ENCODE measurements at regions of chr4 and their contacts with region 1.

Region 1: DNA sequence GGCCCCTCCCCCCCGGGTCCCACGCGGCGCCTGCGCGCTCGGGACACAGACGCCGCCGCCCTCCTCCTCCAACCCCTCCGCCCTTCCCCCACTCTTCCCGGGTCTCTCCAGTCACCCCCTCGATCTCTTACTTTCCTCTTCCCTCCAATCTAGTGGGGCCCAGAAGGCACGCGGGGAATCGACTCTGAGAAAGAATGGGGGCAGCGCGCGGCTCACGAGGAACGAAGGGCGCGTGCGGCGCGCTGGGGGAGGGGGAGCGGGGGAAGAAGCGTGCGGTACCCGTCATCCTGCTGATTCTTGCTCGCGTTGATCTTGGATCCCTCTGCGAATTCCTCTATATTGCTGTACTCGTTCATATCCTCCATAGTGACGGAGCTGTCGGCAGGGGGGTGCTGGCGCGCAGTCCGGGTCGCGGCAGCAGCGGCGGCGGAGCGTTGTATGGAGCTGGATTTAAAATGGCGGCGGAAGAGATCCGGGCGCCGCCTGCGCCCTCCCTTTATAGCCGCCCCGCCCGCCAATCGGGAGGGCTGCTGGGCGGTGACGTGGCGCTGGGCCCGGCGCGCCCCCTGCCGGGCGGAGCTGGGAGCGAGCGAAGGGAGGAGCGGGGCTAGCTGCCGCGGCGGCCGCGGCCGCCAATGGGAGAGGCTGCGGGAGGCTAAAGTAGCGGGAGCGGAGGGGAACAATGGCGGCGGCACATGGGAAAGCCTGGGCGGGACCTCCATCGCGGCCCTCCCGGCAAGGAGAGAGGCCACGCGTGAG is 1.1 kb downstream of the HNRNPDL start:
- DNase-seq: peak; percentile 91
- H3K4me3 ChIP-seq: peak overlapping the region; percentile 95 to 98 (median 98)
- H3K27ac ChIP-seq: peak overlapping the region; percentile 96
- H3K4me1 ChIP-seq: peaks cover 42% of the 10 kb centered on the region
- H3K27me3 ChIP-seq: no peaks in the 10 kb centered on the region
- CTCF ChIP-seq: peak; percentile 74 to 78

Region 2: GRCh38 chr4:81085291-81085690 is 1343.9 kb before region 1 on chr4:
- CTCF ChIA-PET with region 1: no interaction called
- dilution Hi-C with region 1: no loop called
- in situ Hi-C with region 1: no loop called
- intact Hi-C with region 1: no loop called
- DNase-seq: no peak
- H3K4me3 ChIP-seq: no peak overlapping the region
- H3K27ac ChIP-seq: no peak overlapping the region
- H3K4me1 ChIP-seq: no peaks in the 10 kb centered on the region
- H3K27me3 ChIP-seq: no peaks in the 10 kb centered on the region
- CTCF ChIP-seq: no peak

Region 3: GRCh38 chr4:82331814-82332213 is 97.3 kb before region 1 on chr4:
- CTCF ChIA-PET with region 1: no interaction called
- dilution Hi-C with region 1: no loop called
- in situ Hi-C with region 1: no loop called
- intact Hi-C with region 1: no loop called
- DNase-seq: no peak
- H3K4me3 ChIP-seq: no peak overlapping the region
- H3K27ac ChIP-seq: no peak overlapping the region
- H3K4me1 ChIP-seq: no peaks in the 10 kb centered on the region
- H3K27me3 ChIP-seq: no peaks in the 10 kb centered on the region
- CTCF ChIP-seq: no peak

Region 4: DNA sequence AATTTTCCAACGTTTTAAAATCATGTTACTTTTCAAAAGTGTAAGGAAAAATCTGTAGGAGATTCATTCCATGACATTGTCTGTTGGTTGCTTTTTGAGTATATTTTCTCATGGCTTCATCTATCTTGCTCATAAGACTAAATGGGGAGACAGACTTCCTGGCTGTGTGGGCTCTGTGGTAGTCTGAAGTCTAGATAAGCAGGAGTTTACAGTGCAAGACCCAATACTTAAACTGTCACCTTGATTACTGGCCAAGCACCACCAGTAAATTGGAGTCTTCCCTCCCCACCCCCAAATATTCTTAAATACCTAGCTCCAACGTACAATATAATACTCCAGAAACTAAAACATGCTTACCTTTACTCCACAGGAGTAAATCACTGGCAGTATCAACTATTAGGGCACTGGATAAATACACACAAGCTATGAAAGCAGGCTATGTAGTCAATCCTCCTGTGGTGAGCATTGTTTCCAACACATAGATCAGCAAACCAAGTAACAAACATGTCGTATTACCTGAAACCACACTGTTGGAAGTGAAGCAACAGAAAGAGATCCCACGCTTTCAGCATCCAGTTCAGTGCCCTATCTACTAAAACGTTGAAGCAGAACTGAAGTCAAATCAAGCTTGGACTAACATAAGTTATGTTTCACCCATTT is 61.6 kb before region 1 on chr4:
- CTCF ChIA-PET with region 1: no interaction called
- dilution Hi-C with region 1: loop called (anchors 5 kb)
- in situ Hi-C with region 1: no loop called
- intact Hi-C with region 1: no loop called
- DNase-seq: no peak
- H3K4me3 ChIP-seq: no peak overlapping the region
- H3K27ac ChIP-seq: no peak overlapping the region
- H3K4me1 ChIP-seq: peaks cover 26% of the 10 kb centered on the region
- H3K27me3 ChIP-seq: no peaks in the 10 kb centered on the region
- CTCF ChIP-seq: no peak

Region 5: DNA sequence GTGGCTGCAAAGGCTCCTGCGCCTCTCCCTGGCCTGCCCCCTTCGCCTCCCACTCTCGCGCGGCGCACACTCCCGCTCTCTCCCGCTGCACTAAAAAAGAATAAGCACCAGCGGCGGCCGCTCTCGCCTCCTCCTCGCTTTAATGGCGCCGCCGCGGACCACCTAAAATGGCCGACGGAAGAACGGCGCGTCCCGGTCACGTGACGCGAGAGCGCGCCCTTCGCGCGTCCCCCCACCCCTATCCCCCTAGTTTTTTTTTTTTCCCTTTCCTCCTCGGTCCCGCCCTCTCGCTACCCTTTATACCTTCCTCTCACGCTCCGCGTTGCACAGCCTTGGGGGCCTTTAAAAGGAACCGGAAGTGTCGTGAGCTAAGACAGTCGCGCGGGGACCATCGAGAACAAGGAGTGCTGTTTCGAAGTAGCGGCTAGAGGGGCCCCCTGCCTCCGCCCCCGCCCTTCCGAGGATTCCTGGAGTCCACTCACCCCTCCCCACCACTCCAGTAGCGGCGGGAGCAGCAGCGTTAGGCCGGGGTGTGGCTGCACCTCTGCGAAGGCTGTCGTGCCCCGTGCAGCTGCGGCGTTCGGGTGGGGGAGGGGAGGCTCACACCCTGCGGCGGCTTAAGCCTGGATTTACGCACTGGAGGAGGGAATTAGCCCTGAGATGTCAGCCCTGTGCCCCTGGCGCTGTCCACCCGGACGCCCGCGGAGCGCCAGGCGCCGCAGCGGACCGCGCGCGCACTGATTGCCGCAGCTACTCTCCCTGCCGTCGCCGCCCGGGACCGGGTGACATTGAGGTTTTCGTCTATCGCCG is 55.1 kb before region 1 on chr4 and contains the start of gene HNRNPD:
- CTCF ChIA-PET with region 1: interaction called, 4 read pairs
- dilution Hi-C with region 1: loop called (anchors 5 kb)
- in situ Hi-C with region 1: loop called in 1 of 2 experiments (anchors 5 kb)
- intact Hi-C with region 1: loop called (anchors 1 kb)
- DNase-seq: peak; percentile 100
- H3K4me3 ChIP-seq: peak within 1 kb of the TSS; percentile 94 to 100 (median 98)
- H3K27ac ChIP-seq: peak within 1 kb of the TSS; percentile 99
- H3K4me1 ChIP-seq: peaks cover 17% of the 10 kb centered on the region
- H3K27me3 ChIP-seq: no peaks in the 10 kb centered on the region
- CTCF ChIP-seq: peak in 1 of 2 donors; percentile 3
- total RNA-seq, gene HNRNPD: 13.5 to 251 TPM

Region 6: GRCh38 chr4:82379964-82380733 is 49.0 kb before region 1 on chr4:
- CTCF ChIA-PET with region 1: no interaction called
- dilution Hi-C with region 1: no loop called
- in situ Hi-C with region 1: loop called (anchors 5 kb)
- intact Hi-C with region 1: loop called (anchors 1 kb)
- DNase-seq: peak; percentile 96
- H3K4me3 ChIP-seq: no peak overlapping the region
- H3K27ac ChIP-seq: no peak overlapping the region
- H3K4me1 ChIP-seq: peaks cover 16% of the 10 kb centered on the region
- H3K27me3 ChIP-seq: no peaks in the 10 kb centered on the region
- CTCF ChIP-seq: peak; percentile 11 to 48

Region 7: GRCh38 chr4:82394910-82395309 is 34.2 kb before region 1 on chr4:
- CTCF ChIA-PET with region 1: interaction called, 3 read pairs
- dilution Hi-C with region 1: no loop called
- in situ Hi-C with region 1: no loop called
- intact Hi-C with region 1: loop called (anchors 1 kb)
- DNase-seq: peak; percentile 96
- H3K4me3 ChIP-seq: no peak overlapping the region
- H3K27ac ChIP-seq: peak overlapping the region; percentile 68
- H3K4me1 ChIP-seq: peaks cover 18% of the 10 kb centered on the region
- H3K27me3 ChIP-seq: no peaks in the 10 kb centered on the region
- CTCF ChIP-seq: no peak